IMR-90 (cell line): ENCODE measurements at regions of chr20 and their contacts with region 1.

Region 1: DNA sequence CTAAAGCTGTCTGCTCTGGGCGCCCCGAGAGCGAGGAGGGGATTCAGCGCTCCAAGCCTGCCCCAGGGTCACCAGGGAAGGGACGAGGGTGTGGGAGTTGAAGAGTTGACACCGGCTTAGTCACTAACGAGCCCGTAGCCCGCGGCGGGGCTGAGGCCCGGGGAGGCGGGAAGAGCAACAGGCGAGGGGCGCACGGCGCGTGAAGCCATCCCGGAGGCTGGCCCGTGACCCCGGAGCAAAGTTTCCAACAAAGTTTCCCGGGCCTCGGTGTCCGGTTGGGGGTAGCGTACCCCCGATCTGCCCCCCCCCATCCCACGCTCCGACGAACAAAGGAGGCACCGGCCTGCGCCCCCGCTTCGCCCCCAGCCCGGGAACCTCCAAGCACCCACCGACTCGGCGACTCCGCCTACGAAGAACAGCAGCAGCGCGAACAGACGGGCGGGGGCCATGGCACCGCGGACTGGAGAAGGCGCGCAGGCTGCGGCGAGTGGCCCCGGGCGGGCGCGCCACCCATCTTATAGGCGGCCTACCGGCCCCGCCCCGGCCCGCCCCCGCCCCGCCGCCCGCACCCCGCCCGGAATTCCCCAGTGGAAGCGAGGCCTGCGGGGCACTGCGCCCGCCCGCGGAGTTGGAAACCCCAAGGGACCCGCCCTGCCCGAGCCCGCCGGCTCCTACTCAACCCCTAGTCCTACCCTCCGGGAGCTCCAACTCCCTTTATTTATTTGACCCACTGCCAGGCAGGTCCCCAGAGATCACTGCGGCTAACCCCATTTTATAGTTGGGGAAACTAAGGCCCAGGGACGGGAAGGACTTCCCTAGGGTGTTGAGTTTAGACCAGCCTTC is at the start of gene SDC4:
- DNase-seq: peak; percentile 63
- ATAC-seq: peak; percentile 67
- H3K4me3 ChIP-seq: peak within 1 kb of the TSS; percentile 74
- H3K27ac ChIP-seq: peak within 1 kb of the TSS; percentile 91
- H3K4me1 ChIP-seq: peaks cover 29% of the 10 kb centered on the region
- H3K27me3 ChIP-seq: no peaks in the 10 kb centered on the region
- CTCF ChIP-seq: no peak
- POLR2A ChIP-seq: peak; percentile 99
- RAD21 ChIP-seq: no peak
- total RNA-seq, gene SDC4: 265 and 275 TPM in 2 replicates

Region 2: DNA sequence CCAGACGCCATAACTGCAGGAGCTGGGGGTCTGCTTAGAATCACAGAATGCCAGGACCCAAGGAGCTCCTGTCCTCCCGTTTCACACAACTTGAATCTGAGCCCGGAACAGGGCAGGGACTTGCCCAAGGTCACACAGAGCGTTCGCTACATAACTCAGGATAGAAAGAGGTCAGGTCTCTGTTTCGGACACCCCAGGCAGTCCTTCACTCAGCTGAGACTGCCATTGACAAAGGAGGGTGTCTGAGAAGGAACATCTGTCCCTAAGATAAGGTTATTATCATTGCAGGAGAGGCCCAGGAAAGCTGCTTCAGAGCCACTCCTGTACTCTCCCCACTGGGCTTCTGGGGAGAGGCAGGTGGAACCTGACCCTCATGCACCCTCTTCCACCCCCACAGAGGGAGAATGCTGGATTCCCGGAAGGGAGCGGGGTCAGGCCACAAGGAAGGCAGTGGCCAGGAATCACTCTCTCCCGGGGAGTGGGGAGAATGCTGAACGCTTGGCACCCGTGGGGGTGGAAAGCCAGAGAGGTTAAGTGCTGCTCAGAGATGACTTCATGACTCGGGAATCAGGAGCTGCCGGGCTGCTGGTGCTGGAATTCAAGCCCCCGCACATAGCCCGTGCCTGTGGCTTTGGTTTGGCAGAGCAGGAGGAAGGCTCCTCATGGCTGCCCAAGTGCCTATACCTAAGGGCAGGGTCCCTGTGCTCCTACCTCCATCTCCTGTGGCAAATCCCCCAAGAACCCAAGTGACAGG is 10.6 kb before region 1 on chr20:
- CTCF ChIA-PET with region 1: interaction called, 6 read pairs
- POLR2A ChIA-PET with region 1: interaction called, 11 read pairs
- dilution Hi-C with region 1: no loop called
- in situ Hi-C with region 1: no loop called
- intact Hi-C with region 1: no loop called
- DNase-seq: peak; percentile 94
- ATAC-seq: peak; percentile 72
- H3K4me3 ChIP-seq: no peak overlapping the region
- H3K27ac ChIP-seq: peak overlapping the region; percentile 97
- H3K4me1 ChIP-seq: peaks cover 48% of the 10 kb centered on the region
- H3K27me3 ChIP-seq: no peaks in the 10 kb centered on the region
- CTCF ChIP-seq: no peak
- POLR2A ChIP-seq: no peak
- RAD21 ChIP-seq: no peak

Region 3: DNA sequence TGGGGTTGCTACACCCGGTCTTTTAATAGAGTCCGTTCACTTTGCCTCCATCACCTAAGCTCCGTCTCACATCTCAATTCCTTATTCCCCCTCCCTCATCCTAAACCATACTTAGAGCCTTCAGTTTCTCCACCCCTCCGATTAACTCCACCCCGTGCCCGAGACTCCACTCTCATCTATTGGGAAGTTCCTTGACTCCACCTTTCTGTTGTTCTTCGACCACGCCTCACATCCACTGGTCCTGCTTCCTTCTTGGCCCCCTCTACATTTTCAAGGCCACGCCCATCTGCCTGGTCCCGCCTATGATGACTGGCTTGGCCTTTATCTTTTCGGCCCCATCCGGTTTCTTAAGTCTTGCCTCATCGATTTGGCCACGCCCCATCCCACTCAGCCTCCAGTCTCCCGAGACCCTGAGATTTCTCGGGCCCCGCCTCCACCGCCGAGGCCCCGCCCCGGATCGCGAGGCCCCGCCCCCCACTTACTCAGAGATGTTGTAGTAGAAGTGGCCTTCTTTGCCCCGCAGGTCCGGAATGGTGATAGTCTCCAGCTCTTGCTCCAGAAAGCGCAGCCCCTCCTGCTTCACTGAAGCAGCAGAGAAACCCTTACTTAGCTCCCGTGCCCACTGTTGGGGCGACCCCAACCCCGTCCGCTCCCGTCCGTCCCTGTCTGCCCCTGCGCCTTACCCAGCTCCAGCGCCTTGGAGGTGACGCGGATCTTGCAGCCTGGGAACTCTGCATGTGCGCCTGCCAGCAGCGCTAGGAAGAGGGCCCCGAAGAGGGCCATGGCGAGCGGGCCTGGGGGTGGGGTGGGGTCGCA is 562.7 kb after region 1 on chr20:
- CTCF ChIA-PET with region 1: no interaction called
- POLR2A ChIA-PET with region 1: no interaction called
- dilution Hi-C with region 1: no loop called
- in situ Hi-C with region 1: loop called (anchors 25 kb)
- intact Hi-C with region 1: no loop called
- DNase-seq: peak; percentile 100
- ATAC-seq: peak; percentile 93
- H3K4me3 ChIP-seq: peak overlapping the region; percentile 43
- H3K27ac ChIP-seq: peak overlapping the region; percentile 69
- H3K4me1 ChIP-seq: peaks cover 16% of the 10 kb centered on the region
- H3K27me3 ChIP-seq: no peaks in the 10 kb centered on the region
- CTCF ChIP-seq: no peak
- POLR2A ChIP-seq: no peak
- RAD21 ChIP-seq: no peak

Region 4: GRCh38 chr20:46592580-46593362 is 1244.6 kb after region 1 on chr20:
- CTCF ChIA-PET with region 1: no interaction called
- POLR2A ChIA-PET with region 1: no interaction called
- dilution Hi-C with region 1: no loop called
- in situ Hi-C with region 1: no loop called
- intact Hi-C with region 1: no loop called
- DNase-seq: no peak
- ATAC-seq: no peak
- H3K4me3 ChIP-seq: no peak overlapping the region
- H3K27ac ChIP-seq: no peak overlapping the region
- H3K4me1 ChIP-seq: no peaks in the 10 kb centered on the region
- H3K27me3 ChIP-seq: no peaks in the 10 kb centered on the region
- CTCF ChIP-seq: no peak
- POLR2A ChIP-seq: no peak
- RAD21 ChIP-seq: no peak